ENCODE measurements at regions of chr22 and their contacts with region 1.

Region 1: GRCh38 chr22:23178512-23179254 is 1.6 kb upstream of the BCR start:
- DNase-seq: peak; percentile 49 to 69 (median 63)
- H3K4me3 ChIP-seq: no peak overlapping the region
- H3K4me3 Mint-ChIP-seq: peak overlapping the region; percentile 16 to 28
- H3K27ac ChIP-seq: no peak overlapping the region
- H3K27ac Mint-ChIP-seq: peak overlapping the region in 3 of 7 donors; percentile 4 to 45 (median 35)
- H3K4me1 ChIP-seq: peaks cover 31 to 37% of the 10 kb centered on the region in 2 donors
- H3K4me1 Mint-ChIP-seq: peaks cover 45% of the 10 kb centered on the region
- H3K27me3 ChIP-seq: peaks cover 0 to 5% of the 10 kb centered on the region in 2 donors
- H3K27me3 Mint-ChIP-seq: peaks cover 0 to 16% (median 8%) of the 10 kb centered on the region in 3 donors
- CTCF ChIP-seq: peak; percentile 98

Region 2: DNA sequence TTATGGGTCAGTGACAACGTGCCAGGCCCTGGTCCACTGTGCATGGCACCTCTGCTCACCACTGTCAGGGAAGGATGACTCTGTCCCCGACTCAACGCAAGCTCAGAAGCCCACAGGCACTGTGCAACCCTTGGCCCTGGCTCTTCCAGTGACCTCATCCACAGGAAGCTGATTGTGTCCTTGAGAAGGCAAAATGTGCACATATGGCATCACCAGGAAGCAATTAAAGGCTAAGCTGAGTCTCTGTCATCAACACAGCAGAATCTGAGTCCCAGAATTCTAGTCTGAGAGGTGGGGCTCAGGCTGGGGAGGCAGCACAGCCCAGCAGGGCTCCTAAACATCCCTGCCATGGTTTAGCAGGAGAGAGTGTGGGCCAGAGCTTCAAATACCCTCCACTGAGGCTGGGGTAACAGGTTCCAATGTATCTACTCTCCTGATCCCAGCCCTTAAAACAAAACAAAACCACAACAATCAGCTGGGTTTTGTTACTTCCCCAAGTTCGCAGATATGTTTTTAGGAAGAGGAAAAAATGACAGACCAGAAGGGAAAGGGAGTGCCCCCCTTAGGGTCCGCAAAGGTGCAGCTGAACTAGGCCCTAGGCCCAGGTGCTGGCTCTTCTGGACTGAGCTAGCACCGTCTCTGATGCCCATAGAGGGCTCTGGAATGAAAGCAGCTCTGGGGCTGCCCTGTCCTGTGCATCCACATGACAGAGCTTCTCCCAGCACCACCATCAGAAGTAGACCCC is 141.8 kb before region 1 on chr22:
- intact Hi-C with region 1: no loop called
- DNase-seq: no peak
- H3K4me3 ChIP-seq: no peak overlapping the region
- H3K4me3 Mint-ChIP-seq: no peak overlapping the region
- H3K27ac ChIP-seq: no peak overlapping the region
- H3K27ac Mint-ChIP-seq: no peak overlapping the region
- H3K4me1 ChIP-seq: no peaks in the 10 kb centered on the region
- H3K4me1 Mint-ChIP-seq: peaks cover 10% of the 10 kb centered on the region
- H3K27me3 ChIP-seq: peaks cover 0 to 10% of the 10 kb centered on the region in 2 donors
- H3K27me3 Mint-ChIP-seq: peaks cover 7 to 10% (median 9%) of the 10 kb centered on the region in 3 donors
- CTCF ChIP-seq: no peak

Region 3: GRCh38 chr22:23219822-23220484 is 41.3 kb after region 1 on chr22:
- intact Hi-C with region 1: loop called (anchors 2 to 5 kb)
- DNase-seq: peak; percentile 56 to 66 (median 60)
- H3K4me3 ChIP-seq: peak overlapping the region; percentile 2 to 62 (median 9)
- H3K4me3 Mint-ChIP-seq: peak overlapping the region; percentile 81 to 93
- H3K27ac ChIP-seq: peak overlapping the region; percentile 68 to 87
- H3K27ac Mint-ChIP-seq: peak overlapping the region; percentile 87 to 95 (median 94)
- H3K4me1 ChIP-seq: peaks cover 98 to 100% of the 10 kb centered on the region in 2 donors
- H3K4me1 Mint-ChIP-seq: peaks cover 100% of the 10 kb centered on the region
- H3K27me3 ChIP-seq: no peaks in the 10 kb centered on the region
- H3K27me3 Mint-ChIP-seq: peaks cover 0 to 5% (median 2%) of the 10 kb centered on the region in 3 donors
- CTCF ChIP-seq: no peak

Region 4: DNA sequence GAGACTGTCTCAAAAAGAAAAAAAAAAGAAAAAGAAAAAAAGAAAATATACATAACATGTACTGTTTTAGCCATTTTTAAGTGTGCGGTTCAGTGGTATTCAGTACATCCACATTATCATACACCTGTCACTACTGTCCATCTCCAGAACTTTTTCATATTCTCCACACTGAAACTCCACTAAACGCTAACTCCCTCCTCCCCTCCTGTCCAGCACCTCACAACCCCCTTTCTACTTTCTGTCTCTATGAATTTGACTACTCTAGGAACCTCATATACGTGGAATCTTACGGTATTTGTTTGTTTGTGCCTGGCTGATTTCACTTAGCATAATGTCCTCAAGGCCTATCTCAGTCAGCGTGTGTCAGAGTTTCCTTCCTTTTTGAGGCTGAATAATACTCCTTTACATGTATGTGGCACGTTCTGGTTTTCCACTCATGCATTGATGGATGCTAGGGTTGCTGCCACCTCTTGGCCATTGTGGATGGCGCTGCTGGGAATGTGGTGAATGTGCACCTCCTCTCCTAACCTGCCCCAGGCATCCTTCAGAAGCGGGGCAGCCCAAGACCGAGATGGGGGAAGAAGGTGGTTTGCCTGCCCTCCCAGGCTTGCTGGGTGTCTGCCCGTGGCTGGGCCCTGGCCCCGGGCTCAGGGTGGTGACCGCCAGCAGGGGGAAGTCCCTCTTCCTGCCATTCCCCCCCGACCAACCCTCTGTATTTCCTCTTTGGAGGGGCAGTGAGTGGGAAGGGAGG is 62.1 kb after region 1 on chr22:
- intact Hi-C with region 1: loop called in 1 of 2 experiments (anchors 5 kb)
- DNase-seq: peak in 2 of 3 donors; percentile 49 to 63
- H3K4me3 ChIP-seq: no peak overlapping the region
- H3K4me3 Mint-ChIP-seq: peak overlapping the region in 1 of 2 donors; percentile 48
- H3K27ac ChIP-seq: peak overlapping the region in 1 of 2 donors; percentile 47
- H3K27ac Mint-ChIP-seq: peak overlapping the region in 6 of 7 donors; percentile 21 to 80 (median 46)
- H3K4me1 ChIP-seq: peaks cover 24 to 50% of the 10 kb centered on the region in 2 donors
- H3K4me1 Mint-ChIP-seq: peaks cover 67% of the 10 kb centered on the region
- H3K27me3 ChIP-seq: no peaks in the 10 kb centered on the region
- H3K27me3 Mint-ChIP-seq: peaks cover 0 to 2% (median 0%) of the 10 kb centered on the region in 3 donors
- CTCF ChIP-seq: peak; percentile 39

Region 5: GRCh38 chr22:23281406-23282088 is 102.9 kb after region 1 on chr22:
- intact Hi-C with region 1: loop called (anchors 1 kb)
- DNase-seq: peak; percentile 62 to 71 (median 65)
- H3K4me3 ChIP-seq: no peak overlapping the region
- H3K4me3 Mint-ChIP-seq: no peak overlapping the region
- H3K27ac ChIP-seq: no peak overlapping the region
- H3K27ac Mint-ChIP-seq: no peak overlapping the region
- H3K4me1 ChIP-seq: peaks cover 3 to 9% of the 10 kb centered on the region in 2 donors
- H3K4me1 Mint-ChIP-seq: peaks cover 8% of the 10 kb centered on the region
- H3K27me3 ChIP-seq: no peaks in the 10 kb centered on the region
- H3K27me3 Mint-ChIP-seq: no peaks in the 10 kb centered on the region
- CTCF ChIP-seq: peak; percentile 93

Region 6: DNA sequence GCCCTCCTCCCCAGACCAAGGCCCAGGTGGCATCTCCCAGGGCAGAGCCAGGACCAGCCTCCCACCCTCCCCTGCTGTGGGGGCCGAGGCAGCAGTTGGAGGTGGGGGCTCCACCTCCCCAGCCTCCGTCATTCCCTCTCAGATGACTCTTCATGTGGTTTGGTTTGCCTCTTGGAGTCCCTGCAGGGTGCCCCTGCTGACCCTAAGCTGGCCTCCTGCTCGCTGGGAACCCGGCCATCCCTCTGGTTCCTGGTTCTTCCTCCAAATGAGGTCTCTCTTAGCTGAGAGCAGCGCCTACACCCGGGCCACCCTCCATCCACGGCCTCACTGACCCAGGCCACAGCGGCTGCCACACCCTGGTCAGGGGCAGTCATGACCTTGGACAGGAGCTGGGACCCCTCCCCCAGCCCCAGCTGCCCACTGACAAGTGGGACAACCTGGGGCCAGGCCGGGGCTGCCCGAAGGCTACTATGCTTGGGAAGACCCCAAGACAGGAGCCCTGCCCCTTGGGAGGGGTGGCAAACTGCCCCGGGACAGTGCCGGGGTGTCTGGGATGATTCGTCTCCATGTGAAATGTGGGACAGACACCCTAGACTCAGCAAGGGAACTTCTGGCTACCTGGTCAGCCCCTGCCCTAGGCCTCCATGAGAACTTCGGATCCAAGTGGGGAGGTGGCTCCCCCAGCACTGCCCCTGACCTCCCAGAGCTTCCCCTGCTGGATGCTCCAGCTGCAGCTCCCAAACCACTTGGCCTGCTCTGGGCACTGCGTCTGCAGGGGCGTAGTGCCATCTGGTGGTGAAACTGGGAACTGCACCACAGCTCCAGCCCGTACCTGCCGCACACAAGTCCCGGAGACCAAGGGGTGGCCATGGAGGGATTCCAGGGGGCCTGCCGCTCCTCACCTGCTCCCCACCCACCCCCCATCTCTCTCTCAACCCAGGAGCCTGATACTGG is 206.9 kb after region 1 on chr22:
- intact Hi-C with region 1: loop called (anchors 5 to 10 kb)
- DNase-seq: peak; percentile 47 to 66 (median 53)
- H3K4me3 ChIP-seq: no peak overlapping the region
- H3K4me3 Mint-ChIP-seq: no peak overlapping the region
- H3K27ac ChIP-seq: no peak overlapping the region
- H3K27ac Mint-ChIP-seq: no peak overlapping the region
- H3K4me1 ChIP-seq: peaks cover 7% of the 10 kb centered on the region in 2 donors
- H3K4me1 Mint-ChIP-seq: peaks cover 8% of the 10 kb centered on the region
- H3K27me3 ChIP-seq: no peaks in the 10 kb centered on the region
- H3K27me3 Mint-ChIP-seq: peaks cover 0 to 7% (median 2%) of the 10 kb centered on the region in 3 donors
- CTCF ChIP-seq: peak; percentile 98

Region 7: GRCh38 chr22:23622634-23623033 is 444.0 kb after region 1 on chr22:
- intact Hi-C with region 1: no loop called
- DNase-seq: no peak
- H3K4me3 ChIP-seq: no peak overlapping the region
- H3K4me3 Mint-ChIP-seq: no peak overlapping the region
- H3K27ac ChIP-seq: no peak overlapping the region
- H3K27ac Mint-ChIP-seq: no peak overlapping the region
- H3K4me1 ChIP-seq: no peaks in the 10 kb centered on the region
- H3K4me1 Mint-ChIP-seq: peaks cover 5% of the 10 kb centered on the region
- H3K27me3 ChIP-seq: no peaks in the 10 kb centered on the region
- H3K27me3 Mint-ChIP-seq: no peaks in the 10 kb centered on the region
- CTCF ChIP-seq: no peak

Measured in CD14-positive monocyte (primary cell).